Common myeloid progenitor, CD34-positive (primary cell): ENCODE measurements at regions of chr20 and their contacts with region 1.

Region 1: GRCh38 chr20:17648791-17649730 is 33.0 kb downstream of the RRBP1 start:
- DNase-seq: peak; percentile 25 to 61 (median 57)
- H3K4me3 ChIP-seq: peak overlapping the region in 1 of 7 experiments; percentile 6
- H3K27ac ChIP-seq: peak overlapping the region; percentile 51 to 72
- H3K4me1 ChIP-seq: peaks cover 23 to 82% (median 53%) of the 10 kb centered on the region in 4 experiments
- H3K27me3 ChIP-seq: no peaks in the 10 kb centered on the region

Region 2: DNA sequence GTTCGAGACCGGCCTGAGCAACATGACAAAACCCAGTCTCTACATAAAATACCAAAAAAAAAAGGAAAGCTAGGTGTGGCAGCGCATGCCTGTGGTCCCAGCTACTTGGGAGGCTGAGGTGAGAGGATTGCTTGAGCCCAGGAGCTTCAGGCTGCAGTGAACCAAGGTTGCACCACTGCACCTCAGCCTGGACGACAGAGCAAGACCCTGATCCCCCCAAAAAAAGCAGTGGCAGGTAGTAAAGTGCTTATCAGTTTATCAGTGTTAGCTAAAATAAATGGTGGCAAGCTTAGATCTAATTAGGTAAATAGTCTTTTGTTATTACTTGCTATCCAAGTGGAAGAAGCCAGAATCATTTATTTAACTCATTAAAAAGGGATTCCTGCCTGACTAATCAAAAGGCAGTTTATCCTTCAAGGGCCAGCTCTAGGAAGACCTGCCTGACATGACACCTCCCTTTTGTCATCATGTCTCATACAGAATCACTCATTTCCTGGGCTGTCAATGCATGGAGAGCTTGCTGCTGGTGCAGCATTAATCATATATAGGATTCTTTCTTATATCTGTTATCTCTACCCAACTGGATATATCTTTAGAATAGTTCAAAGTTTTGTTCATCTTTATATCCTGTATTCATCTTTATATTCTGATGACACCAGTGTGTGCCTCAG is 69.6 kb before region 1 on chr20:
- CTCF ChIA-PET with region 1: no interaction called
- POLR2A ChIA-PET with region 1: no interaction called
- DNase-seq: no peak
- H3K4me3 ChIP-seq: no peak overlapping the region
- H3K27ac ChIP-seq: no peak overlapping the region
- H3K4me1 ChIP-seq: no peaks in the 10 kb centered on the region
- H3K27me3 ChIP-seq: no peaks in the 10 kb centered on the region

Region 3: GRCh38 chr20:17634661-17635331 is 14.3 kb before region 1 on chr20:
- CTCF ChIA-PET with region 1: interaction called, 52 read pairs
- POLR2A ChIA-PET with region 1: interaction called, 3 read pairs
- DNase-seq: peak; percentile 42 to 88 (median 88)
- H3K4me3 ChIP-seq: peak overlapping the region in 1 of 7 experiments; percentile 40
- H3K27ac ChIP-seq: peak overlapping the region in 1 of 2 experiments; percentile 35
- H3K4me1 ChIP-seq: peaks cover 0 to 31% (median 24%) of the 10 kb centered on the region in 4 experiments
- H3K27me3 ChIP-seq: no peaks in the 10 kb centered on the region

Region 4: DNA sequence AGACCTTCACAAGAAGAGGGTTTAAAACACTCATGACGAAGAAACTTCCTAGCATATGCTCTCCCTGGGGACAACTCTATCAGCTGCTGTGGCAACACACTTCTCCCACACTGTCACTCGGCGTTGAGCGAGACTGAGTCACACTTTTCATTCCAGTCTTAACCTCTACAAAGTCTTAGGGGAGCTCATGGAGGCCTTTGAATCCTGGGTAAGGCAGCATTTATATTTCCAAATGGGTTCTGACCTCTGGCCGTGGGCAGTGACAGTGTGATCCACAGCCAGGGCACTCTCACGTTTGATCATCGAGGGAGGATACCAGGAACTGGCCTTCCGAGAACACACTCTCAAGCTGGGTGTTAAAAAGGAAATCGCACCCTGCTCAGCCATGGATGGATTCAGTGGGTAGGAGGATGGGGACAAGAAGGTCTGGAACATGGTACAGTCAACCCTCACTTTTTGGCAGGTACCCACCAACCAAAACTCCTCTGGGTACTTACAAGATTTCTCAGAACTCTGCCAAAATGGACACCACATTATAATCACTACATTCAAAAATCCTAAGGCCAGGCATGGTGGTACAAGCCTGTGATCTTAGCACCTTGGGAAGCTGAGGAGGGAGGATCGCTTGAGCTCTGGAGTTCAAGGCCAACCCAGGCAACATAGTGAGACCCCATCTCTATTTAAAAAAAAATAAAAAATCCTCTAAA is 13.4 kb after region 1 on chr20:
- CTCF ChIA-PET with region 1: interaction called, 15 read pairs
- POLR2A ChIA-PET with region 1: interaction called, 7 read pairs
- DNase-seq: no peak
- H3K4me3 ChIP-seq: no peak overlapping the region
- H3K27ac ChIP-seq: no peak overlapping the region
- H3K4me1 ChIP-seq: peaks cover 20 to 59% (median 44%) of the 10 kb centered on the region in 4 experiments
- H3K27me3 ChIP-seq: no peaks in the 10 kb centered on the region

Region 5: GRCh38 chr20:17825960-17826843 is 177.1 kb after region 1 on chr20:
- CTCF ChIA-PET with region 1: no interaction called
- POLR2A ChIA-PET with region 1: no interaction called
- DNase-seq: no peak
- H3K4me3 ChIP-seq: no peak overlapping the region
- H3K27ac ChIP-seq: no peak overlapping the region
- H3K4me1 ChIP-seq: peaks cover 0 to 23% (median 10%) of the 10 kb centered on the region in 4 experiments
- H3K27me3 ChIP-seq: no peaks in the 10 kb centered on the region